ENCODE measurements at regions of chr13 and their contacts with region 1.

Region 1: GRCh38 chr13:52809310-52809769 is 39.1 kb downstream of the PCDH8 start:
- DNase-seq: peak; percentile 79 to 81
- H3K4me3 ChIP-seq: no peak overlapping the region
- H3K4me3 Mint-ChIP-seq: no peak overlapping the region
- H3K27ac Mint-ChIP-seq: no peak overlapping the region
- H3K4me1 ChIP-seq: no peaks in the 10 kb centered on the region
- H3K4me1 Mint-ChIP-seq: no peaks in the 10 kb centered on the region
- H3K27me3 ChIP-seq: no peaks in the 10 kb centered on the region
- H3K27me3 Mint-ChIP-seq: peaks cover 6% of the 10 kb centered on the region
- CTCF ChIP-seq: peak; percentile 86 to 91

Region 2: DNA sequence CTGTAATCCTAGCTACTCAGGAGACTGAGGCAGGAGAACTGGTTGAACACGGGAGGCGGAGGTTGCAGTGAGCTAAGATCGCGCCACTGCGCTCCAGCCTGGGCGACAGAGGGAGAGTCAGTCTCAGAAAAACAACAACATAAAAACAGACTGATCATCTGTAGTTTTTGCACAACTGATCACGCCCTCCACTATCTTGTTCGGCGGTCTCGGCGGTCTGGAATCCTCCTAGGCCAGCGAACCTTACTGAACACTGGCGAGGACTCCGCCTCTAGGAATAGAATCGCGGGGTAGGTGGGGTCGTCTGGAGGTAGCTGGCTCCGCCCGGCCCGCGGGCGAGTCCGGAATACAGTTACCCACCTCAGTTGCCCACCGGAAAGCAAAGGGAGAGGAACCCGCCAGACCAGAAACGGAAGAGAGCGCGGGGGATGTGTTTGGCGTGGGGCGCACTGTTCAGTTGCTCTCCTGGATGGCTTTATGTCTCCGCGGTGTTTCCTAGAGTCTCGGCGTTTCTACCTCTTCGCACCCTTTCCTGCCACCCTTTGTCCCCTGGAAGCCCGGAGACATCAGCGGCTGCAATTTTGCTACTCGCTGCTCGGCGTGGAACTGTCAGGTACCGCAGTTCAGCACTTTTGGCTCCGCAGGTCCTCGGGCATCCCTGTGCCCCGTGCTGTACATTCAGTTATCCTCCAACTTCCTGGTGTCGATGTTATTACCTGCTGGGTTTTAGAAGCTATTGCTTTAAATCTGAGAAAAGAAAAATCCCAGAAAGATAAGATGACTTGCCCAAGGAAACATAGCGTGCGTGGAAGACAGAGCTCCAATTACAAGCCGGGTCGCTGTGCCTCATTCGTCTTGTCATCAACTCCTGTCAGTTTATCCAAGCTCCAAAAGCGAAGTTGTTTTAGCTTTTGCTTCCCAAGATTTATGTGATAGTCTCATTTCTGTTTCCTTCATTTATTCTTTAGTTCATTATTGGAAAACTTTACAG is 192.0 kb before region 1 on chr13:
- CTCF ChIA-PET with region 1: interaction called, 4 read pairs
- POLR2A ChIA-PET with region 1: interaction called, 14 read pairs
- intact Hi-C with region 1: no loop called
- DNase-seq: peak; percentile 89
- H3K4me3 ChIP-seq: peak overlapping the region; percentile 68
- H3K4me3 Mint-ChIP-seq: peak overlapping the region; percentile 100
- H3K27ac Mint-ChIP-seq: peak overlapping the region; percentile 87
- H3K4me1 ChIP-seq: no peaks in the 10 kb centered on the region
- H3K4me1 Mint-ChIP-seq: no peaks in the 10 kb centered on the region
- H3K27me3 ChIP-seq: no peaks in the 10 kb centered on the region
- H3K27me3 Mint-ChIP-seq: no peaks in the 10 kb centered on the region
- CTCF ChIP-seq: no peak

Region 3: GRCh38 chr13:52665325-52665724 is 144.0 kb before region 1 on chr13:
- CTCF ChIA-PET with region 1: interaction called, 9 read pairs
- POLR2A ChIA-PET with region 1: interaction called, 3 read pairs
- intact Hi-C with region 1: loop called (anchors 1 kb)
- DNase-seq: no peak
- H3K4me3 ChIP-seq: no peak overlapping the region
- H3K4me3 Mint-ChIP-seq: no peak overlapping the region
- H3K27ac Mint-ChIP-seq: no peak overlapping the region
- H3K4me1 ChIP-seq: no peaks in the 10 kb centered on the region
- H3K4me1 Mint-ChIP-seq: no peaks in the 10 kb centered on the region
- H3K27me3 ChIP-seq: no peaks in the 10 kb centered on the region
- H3K27me3 Mint-ChIP-seq: no peaks in the 10 kb centered on the region
- CTCF ChIP-seq: peak; percentile 42 to 44

Region 4: GRCh38 chr13:52707375-52707774 is 102.0 kb before region 1 on chr13:
- CTCF ChIA-PET with region 1: interaction called, 5 read pairs
- POLR2A ChIA-PET with region 1: no interaction called
- intact Hi-C with region 1: loop called (anchors 1 kb)
- DNase-seq: no peak
- H3K4me3 ChIP-seq: no peak overlapping the region
- H3K4me3 Mint-ChIP-seq: no peak overlapping the region
- H3K27ac Mint-ChIP-seq: no peak overlapping the region
- H3K4me1 ChIP-seq: no peaks in the 10 kb centered on the region
- H3K4me1 Mint-ChIP-seq: no peaks in the 10 kb centered on the region
- H3K27me3 ChIP-seq: no peaks in the 10 kb centered on the region
- H3K27me3 Mint-ChIP-seq: peaks cover 3% of the 10 kb centered on the region
- CTCF ChIP-seq: peak in 1 of 2 experiments; percentile 4

Region 5: DNA sequence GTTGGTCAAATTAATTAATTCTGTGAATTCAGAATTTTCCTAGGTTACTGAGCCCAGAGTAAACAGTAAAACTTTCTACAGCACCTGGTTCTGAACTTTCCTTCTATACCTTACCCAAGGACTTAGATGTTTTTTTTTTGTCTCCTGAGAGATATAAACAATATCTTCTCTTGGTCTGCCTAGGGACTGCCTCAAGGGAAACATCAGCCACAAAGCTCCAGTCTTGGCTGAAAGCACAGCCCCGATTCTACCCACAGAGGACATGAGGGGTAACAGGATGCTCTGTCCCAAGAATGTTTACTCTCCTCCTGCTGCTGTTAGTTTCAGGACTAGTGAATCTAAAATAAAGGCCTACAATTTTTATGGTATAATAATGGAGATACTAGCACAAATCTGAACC is 84.0 kb before region 1 on chr13:
- CTCF ChIA-PET with region 1: no interaction called
- POLR2A ChIA-PET with region 1: no interaction called
- intact Hi-C with region 1: loop called (anchors 5 kb)
- DNase-seq: no peak
- H3K4me3 ChIP-seq: no peak overlapping the region
- H3K4me3 Mint-ChIP-seq: no peak overlapping the region
- H3K27ac Mint-ChIP-seq: no peak overlapping the region
- H3K4me1 ChIP-seq: no peaks in the 10 kb centered on the region
- H3K4me1 Mint-ChIP-seq: no peaks in the 10 kb centered on the region
- H3K27me3 ChIP-seq: no peaks in the 10 kb centered on the region; the same call in 1 of the 2 replicates
- H3K27me3 Mint-ChIP-seq: peaks cover 4% of the 10 kb centered on the region
- CTCF ChIP-seq: no peak

Region 6: DNA sequence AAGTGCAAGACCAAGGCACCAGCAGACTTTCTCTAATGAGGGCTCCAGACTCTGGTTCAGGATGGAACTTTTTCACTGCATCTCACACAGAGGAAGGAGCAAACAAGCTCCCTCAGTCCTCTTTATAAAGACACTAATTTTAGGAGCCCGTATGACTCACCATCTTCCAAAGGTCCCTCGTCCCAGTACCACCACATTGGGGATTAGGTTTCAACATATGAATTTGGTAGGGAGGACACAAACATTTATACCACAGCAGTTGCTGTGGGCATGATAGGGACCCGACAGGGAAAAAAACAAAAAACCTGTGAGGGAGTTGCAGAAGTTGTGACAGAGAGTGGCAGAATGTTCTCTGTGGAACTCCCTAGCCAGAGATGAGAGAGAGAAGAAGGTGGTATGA is 63.2 kb before region 1 on chr13:
- CTCF ChIA-PET with region 1: no interaction called
- POLR2A ChIA-PET with region 1: no interaction called
- intact Hi-C with region 1: loop called (anchors 1 kb)
- DNase-seq: no peak
- H3K4me3 ChIP-seq: no peak overlapping the region
- H3K4me3 Mint-ChIP-seq: no peak overlapping the region
- H3K27ac Mint-ChIP-seq: no peak overlapping the region
- H3K4me1 ChIP-seq: no peaks in the 10 kb centered on the region; the same call in 1 of the 2 replicates
- H3K4me1 Mint-ChIP-seq: no peaks in the 10 kb centered on the region
- H3K27me3 ChIP-seq: no peaks in the 10 kb centered on the region
- H3K27me3 Mint-ChIP-seq: peaks cover 34% of the 10 kb centered on the region
- CTCF ChIP-seq: no peak

Region 7: DNA sequence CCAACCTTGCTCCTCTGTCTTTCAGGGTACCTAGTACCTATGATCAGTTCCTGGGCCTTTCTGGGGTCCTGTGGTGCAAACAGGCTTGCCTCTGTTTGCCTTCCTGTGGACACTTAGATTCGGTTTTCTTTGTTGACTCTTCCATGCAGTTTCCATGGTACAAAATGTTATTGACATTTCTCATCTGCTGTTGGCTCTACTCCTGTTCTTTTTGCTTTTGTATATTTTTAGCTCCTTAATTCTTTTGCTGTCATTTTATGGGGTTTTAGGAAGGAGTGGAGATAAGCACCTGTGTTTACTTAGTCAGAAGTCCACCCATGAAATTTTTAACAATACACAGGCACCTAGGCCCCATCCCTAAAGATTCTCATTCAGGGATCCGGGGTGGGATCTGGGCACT is 49.3 kb before region 1 on chr13:
- CTCF ChIA-PET with region 1: no interaction called
- POLR2A ChIA-PET with region 1: no interaction called
- intact Hi-C with region 1: no loop called
- DNase-seq: no peak
- H3K4me3 ChIP-seq: no peak overlapping the region
- H3K4me3 Mint-ChIP-seq: no peak overlapping the region
- H3K27ac Mint-ChIP-seq: peak overlapping the region; percentile 2
- H3K4me1 ChIP-seq: no peaks in the 10 kb centered on the region
- H3K4me1 Mint-ChIP-seq: peaks cover 12% of the 10 kb centered on the region
- H3K27me3 ChIP-seq: no peaks in the 10 kb centered on the region
- H3K27me3 Mint-ChIP-seq: no peaks in the 10 kb centered on the region
- CTCF ChIP-seq: no peak

Region 8: GRCh38 chr13:52903320-52903719 is 94.0 kb after region 1 on chr13:
- CTCF ChIA-PET with region 1: no interaction called
- POLR2A ChIA-PET with region 1: no interaction called
- intact Hi-C with region 1: no loop called
- DNase-seq: no peak
- H3K4me3 ChIP-seq: no peak overlapping the region
- H3K4me3 Mint-ChIP-seq: no peak overlapping the region
- H3K27ac Mint-ChIP-seq: no peak overlapping the region
- H3K4me1 ChIP-seq: no peaks in the 10 kb centered on the region
- H3K4me1 Mint-ChIP-seq: no peaks in the 10 kb centered on the region
- H3K27me3 ChIP-seq: no peaks in the 10 kb centered on the region; the same call in 1 of the 2 replicates
- H3K27me3 Mint-ChIP-seq: peaks cover 38% of the 10 kb centered on the region
- CTCF ChIP-seq: no peak

Region 9: GRCh38 chr13:52921194-52921593 is 111.9 kb after region 1 on chr13:
- CTCF ChIA-PET with region 1: no interaction called
- POLR2A ChIA-PET with region 1: no interaction called
- intact Hi-C with region 1: no loop called
- DNase-seq: no peak
- H3K4me3 ChIP-seq: no peak overlapping the region
- H3K4me3 Mint-ChIP-seq: no peak overlapping the region
- H3K27ac Mint-ChIP-seq: no peak overlapping the region
- H3K4me1 ChIP-seq: no peaks in the 10 kb centered on the region
- H3K4me1 Mint-ChIP-seq: no peaks in the 10 kb centered on the region
- H3K27me3 ChIP-seq: no peaks in the 10 kb centered on the region
- H3K27me3 Mint-ChIP-seq: peaks cover 8% of the 10 kb centered on the region
- CTCF ChIP-seq: no peak

Region 10: DNA sequence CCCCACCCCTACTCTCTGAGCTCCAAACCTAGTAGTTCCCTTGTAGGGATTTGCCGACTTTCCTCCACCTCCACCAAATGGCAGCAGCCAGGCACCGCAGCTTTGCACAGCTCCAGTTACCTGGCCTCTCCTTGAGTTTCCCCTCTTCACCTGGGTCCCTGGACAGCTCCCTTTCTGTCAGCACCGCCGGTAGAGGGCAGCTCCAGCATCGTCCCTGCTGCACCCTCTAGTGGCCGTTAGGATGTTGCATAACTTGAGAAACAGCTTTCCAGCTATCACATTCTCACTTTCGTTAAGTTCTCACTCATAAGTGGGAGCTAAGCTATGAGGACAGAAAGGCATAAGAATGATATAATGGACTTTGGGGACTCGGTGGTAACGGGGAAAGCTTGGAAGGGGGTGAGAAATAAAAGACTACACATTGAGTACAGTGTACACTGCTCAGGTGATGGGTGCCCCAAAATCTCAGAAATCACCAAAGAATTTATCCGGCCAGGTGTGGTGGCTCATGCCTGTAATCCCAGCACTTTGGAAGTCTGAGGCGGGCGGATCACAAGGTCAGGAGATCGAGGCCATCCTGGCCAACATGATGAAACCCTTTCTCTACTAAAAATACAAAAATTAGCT is 158.8 kb after region 1 on chr13:
- CTCF ChIA-PET with region 1: interaction called, 10 read pairs
- POLR2A ChIA-PET with region 1: no interaction called
- intact Hi-C with region 1: no loop called
- DNase-seq: peak; percentile 86 to 89
- H3K4me3 ChIP-seq: no peak overlapping the region
- H3K4me3 Mint-ChIP-seq: no peak overlapping the region
- H3K27ac Mint-ChIP-seq: no peak overlapping the region
- H3K4me1 ChIP-seq: no peaks in the 10 kb centered on the region
- H3K4me1 Mint-ChIP-seq: no peaks in the 10 kb centered on the region
- H3K27me3 ChIP-seq: no peaks in the 10 kb centered on the region
- H3K27me3 Mint-ChIP-seq: peaks cover 11% of the 10 kb centered on the region
- CTCF ChIP-seq: peak; percentile 93 to 100

Region 11: GRCh38 chr13:53311561-53311960 is 502.2 kb after region 1 on chr13:
- CTCF ChIA-PET with region 1: no interaction called
- POLR2A ChIA-PET with region 1: no interaction called
- intact Hi-C with region 1: no loop called
- DNase-seq: no peak
- H3K4me3 ChIP-seq: no peak overlapping the region
- H3K4me3 Mint-ChIP-seq: no peak overlapping the region
- H3K27ac Mint-ChIP-seq: no peak overlapping the region
- H3K4me1 ChIP-seq: no peaks in the 10 kb centered on the region; the same call in 1 of the 2 replicates
- H3K4me1 Mint-ChIP-seq: peaks cover 24% of the 10 kb centered on the region
- H3K27me3 ChIP-seq: no peaks in the 10 kb centered on the region
- H3K27me3 Mint-ChIP-seq: peaks cover 1% of the 10 kb centered on the region
- CTCF ChIP-seq: peak in 1 of 2 experiments; percentile 14